GM10248 (cell line): ENCODE measurements at regions of chr1 and their contacts with region 1.

Region 1: DNA sequence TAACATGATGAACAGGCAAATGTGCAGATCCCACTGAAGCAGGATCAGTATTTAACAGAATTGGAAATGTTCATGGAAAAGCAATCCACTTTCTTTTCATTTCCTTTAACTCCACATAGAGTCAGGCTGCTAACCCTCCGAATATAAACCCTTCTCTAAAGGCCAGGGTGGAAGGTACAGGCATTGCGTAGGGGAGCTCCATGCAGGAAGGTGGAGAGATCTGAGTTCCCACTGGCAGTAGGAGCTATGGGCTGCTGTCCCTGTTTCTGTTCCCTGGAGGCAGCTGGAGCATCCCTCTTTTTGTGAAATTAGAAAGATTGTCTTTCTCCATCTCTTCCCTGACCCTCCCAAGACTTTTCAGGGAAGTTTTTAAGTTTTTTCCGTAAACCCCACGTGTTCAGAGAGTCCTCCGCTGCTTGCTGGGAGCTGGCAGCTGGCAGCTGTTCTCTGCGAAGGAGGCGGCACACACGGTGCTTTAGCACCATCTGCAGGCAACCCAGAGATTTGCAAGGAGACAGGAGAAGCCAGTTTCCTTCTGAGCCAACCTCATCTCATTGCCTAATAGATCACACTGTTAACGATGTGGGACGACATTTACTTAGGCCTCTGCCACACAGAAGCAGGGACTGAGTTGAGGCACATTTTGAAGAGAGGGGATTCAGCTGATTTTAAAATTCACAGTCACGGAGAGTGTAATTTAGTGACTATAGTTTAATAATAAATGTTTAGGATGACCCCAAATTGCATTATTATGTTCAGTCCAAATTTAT is 55.4 kb upstream of the HOOK1 start:
- DNase-seq: peak; percentile 82
- CTCF ChIP-seq: peak; percentile 87

Region 2: GRCh38 chr1:58515794-58516401 is 1243.4 kb before region 1 on chr1:
- CTCF ChIA-PET with region 1: interaction called, 11 read pairs
- POLR2A ChIA-PET with region 1: no interaction called
- DNase-seq: peak; percentile 40
- CTCF ChIP-seq: peak; percentile 64

Region 3: GRCh38 chr1:58710190-58711085 is 1048.9 kb before region 1 on chr1:
- CTCF ChIA-PET with region 1: interaction called, 14 read pairs
- POLR2A ChIA-PET with region 1: no interaction called
- DNase-seq: no peak
- CTCF ChIP-seq: no peak

Region 4: DNA sequence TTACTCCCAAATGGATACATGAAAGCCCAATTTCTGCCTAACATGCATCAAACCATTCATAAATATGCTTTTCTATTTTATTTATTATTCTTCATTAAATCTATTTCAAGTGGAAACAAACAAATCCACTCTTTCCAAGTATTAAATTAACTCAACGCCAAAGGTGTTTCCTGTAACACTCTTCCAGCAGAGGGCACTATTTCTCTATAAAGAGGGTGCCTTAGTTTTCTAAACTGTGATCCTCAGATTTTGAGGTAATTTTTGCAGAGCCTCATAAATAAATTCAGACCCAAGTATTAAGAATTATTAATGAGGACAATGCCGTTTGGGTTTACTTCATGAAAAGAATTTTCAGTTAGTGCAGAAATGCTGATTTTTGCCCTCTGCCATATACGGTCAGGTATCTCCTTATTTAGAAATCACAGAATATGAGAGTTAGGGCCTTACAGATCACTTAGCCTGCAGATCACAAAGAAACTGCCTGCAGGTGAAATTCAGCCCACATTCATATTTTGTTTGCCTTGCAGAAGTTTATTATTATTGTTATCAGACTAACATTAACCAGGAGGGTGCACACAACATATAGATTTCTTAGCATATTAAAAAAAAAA is 1019.4 kb before region 1 on chr1:
- CTCF ChIA-PET with region 1: interaction called, 29 read pairs
- POLR2A ChIA-PET with region 1: no interaction called
- DNase-seq: peak; percentile 70
- CTCF ChIP-seq: peak; percentile 56